CD8-positive, alpha-beta memory T cell (primary cell): ENCODE measurements at regions of chr12 and their contacts with region 1.

Region 1: DNA sequence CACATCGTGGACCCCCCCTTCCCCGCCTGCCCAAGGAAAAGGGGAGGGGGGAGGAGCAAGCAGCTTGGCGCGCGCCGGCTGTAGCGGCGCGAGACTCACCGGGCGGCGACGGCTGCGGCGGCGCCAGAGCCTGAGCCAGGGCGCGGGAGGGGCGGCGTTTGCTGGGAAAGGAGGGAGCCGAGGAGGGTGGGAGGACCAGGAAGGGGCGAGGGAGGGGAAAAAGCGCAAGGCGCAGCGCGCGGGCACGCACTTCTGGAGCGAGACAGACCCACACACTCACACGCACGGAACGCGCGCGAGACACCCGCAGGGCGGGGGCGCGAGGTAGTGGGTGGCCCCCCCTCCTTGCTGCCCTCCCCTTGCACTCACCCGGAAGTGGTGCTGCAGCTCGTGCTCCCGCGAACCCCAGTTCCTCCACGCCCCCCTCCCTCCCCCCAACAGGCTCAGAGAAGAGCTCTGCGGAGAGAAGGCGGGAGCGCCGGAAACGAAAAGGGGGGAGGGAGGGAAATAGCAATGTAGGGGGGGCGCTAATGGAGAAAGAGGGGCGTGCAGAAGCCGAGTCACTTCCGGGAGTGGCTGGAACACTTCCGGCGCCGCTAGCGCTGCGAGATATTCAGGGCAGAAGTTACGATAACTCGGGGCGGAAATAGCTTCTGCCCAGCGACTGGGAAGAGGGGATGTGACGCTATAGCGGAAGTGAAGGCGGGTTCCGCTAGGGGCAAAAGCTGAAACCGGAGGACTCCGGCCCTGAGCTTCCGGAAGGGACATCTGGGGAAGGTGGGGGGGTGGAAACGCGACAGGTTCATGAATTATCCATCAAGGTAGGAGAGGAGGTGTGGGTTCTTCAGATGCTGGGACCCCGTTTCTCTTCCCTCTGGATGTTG is at the start of gene ZNF384:
- DNase-seq: peak; percentile 94 to 98 (median 95)
- H3K4me3 ChIP-seq: peak within 1 kb of the TSS; percentile 61
- H3K4me3 Mint-ChIP-seq: peak within 1 kb of the TSS; percentile 85 to 96 (median 94)
- H3K27ac ChIP-seq: peak within 1 kb of the TSS; percentile 82
- H3K27ac Mint-ChIP-seq: peak within 1 kb of the TSS; percentile 92 to 99 (median 99)
- H3K4me1 ChIP-seq: peaks cover 36% of the 10 kb centered on the region
- H3K4me1 Mint-ChIP-seq: peaks cover 50 to 63% (median 55%) of the 10 kb centered on the region in 3 donors
- H3K27me3 ChIP-seq: no peaks in the 10 kb centered on the region
- H3K27me3 Mint-ChIP-seq: peaks cover 0 to 1% of the 10 kb centered on the region in 2 donors
- total RNA-seq, gene ZNF384: 58.1 to 63.3 TPM

Region 2: DNA sequence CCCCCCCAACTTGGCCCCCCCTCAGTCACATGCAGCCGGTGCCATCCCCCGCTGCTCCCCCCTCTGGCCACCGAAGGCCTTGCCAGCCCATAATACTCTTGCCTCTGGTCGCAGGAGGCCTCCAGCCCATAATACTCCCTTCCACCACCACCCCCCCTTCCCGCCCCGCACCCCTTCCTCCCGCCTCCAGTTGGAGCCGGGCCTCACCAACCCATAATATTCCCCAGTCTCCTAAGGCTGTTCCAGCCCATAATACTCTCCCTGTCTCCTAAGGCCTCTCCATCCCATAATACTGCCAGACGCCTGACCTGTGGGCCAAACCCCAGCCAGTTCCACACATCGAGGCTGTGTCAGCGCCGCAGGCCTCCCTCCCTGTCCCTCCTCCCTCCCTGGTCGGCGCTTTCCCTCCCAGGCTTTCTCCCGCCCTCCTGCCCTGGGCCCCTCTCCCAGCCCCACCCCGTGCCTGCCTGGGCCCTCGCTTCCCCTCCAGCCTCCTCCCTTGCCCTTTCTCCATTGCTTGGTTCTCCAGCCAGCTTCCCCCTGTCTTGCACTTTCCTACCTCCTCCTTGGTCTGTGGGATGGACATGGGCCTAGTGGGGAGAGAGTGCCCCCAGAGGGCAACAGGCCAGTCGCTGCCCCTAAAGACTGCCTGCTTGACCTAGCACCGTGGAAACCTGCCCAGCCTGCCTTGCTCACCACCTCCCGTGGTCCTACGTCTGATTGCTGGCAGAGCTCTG is 75.3 kb before region 1 on chr12:
- CTCF ChIA-PET with region 1: interaction called, 8 read pairs
- POLR2A ChIA-PET with region 1: interaction called, 19 read pairs
- DNase-seq: peak; percentile 48 to 84 (median 55)
- H3K4me3 ChIP-seq: no peak overlapping the region
- H3K4me3 Mint-ChIP-seq: peak overlapping the region in 2 of 7 donors; percentile 36 to 72
- H3K27ac ChIP-seq: peak overlapping the region; percentile 67
- H3K27ac Mint-ChIP-seq: peak overlapping the region; percentile 63 to 93 (median 88)
- H3K4me1 ChIP-seq: peaks cover 24% of the 10 kb centered on the region
- H3K4me1 Mint-ChIP-seq: peaks cover 36 to 55% (median 43%) of the 10 kb centered on the region in 3 donors
- H3K27me3 ChIP-seq: no peaks in the 10 kb centered on the region
- H3K27me3 Mint-ChIP-seq: no peaks in the 10 kb centered on the region

Region 3: DNA sequence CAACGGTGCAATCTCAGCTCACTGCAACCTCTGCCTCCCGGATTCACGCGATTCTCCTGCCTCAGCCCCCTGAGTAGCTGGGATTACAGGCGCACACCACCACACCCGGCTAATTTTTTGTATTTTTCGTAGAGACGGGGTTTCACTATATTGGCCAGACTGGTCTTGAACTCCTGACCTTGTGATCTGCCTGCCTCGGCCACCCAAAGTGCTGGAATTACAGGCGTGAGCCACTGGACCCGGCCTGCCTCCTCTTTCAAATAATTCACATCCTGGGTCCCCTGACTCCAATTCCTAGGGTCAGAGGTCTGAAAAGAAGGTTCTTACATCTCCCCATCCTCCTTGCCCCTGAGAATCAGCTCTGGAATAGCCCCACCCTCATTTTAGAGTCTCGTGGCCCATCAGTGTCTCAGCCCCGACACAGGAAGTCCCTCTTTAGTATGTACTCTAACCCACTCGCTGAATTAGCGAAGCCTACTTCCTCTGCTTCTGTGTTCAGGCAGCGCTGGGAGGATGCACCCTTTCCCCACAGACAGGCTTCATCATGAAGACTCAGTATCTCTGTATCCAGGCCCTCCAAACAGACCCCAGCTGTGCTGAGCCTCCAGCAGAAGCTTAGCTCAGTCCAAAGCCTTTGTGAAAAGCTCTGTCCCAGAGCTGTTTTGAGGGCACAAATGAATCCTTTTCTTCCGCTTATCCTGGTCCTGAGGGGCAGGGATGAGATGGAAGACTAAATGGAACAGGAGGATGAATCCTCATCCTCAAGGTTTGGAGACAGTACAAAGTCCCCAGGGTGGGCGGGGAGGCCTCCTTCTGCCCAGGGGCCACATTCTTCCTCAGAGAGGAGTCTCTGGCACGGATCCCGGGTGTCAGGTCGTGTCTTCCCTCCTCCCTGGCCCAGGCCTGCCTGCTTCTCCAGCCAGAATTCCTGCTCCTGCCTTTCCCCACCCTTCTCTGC is 56.9 kb before region 1 on chr12:
- CTCF ChIA-PET with region 1: interaction called, 4 read pairs
- POLR2A ChIA-PET with region 1: interaction called, 18 read pairs
- DNase-seq: peak; percentile 30 to 69 (median 56)
- H3K4me3 ChIP-seq: peak overlapping the region; percentile 67
- H3K4me3 Mint-ChIP-seq: peak overlapping the region; percentile 82 to 95 (median 92)
- H3K27ac ChIP-seq: peak overlapping the region; percentile 60
- H3K27ac Mint-ChIP-seq: peak overlapping the region; percentile 92 to 100 (median 98)
- H3K4me1 ChIP-seq: peaks cover 48% of the 10 kb centered on the region
- H3K4me1 Mint-ChIP-seq: peaks cover 64 to 74% (median 66%) of the 10 kb centered on the region in 3 donors
- H3K27me3 ChIP-seq: no peaks in the 10 kb centered on the region
- H3K27me3 Mint-ChIP-seq: no peaks in the 10 kb centered on the region

Region 4: GRCh38 chr12:6708960-6709394 is 19.7 kb after region 1 on chr12:
- CTCF ChIA-PET with region 1: no interaction called
- POLR2A ChIA-PET with region 1: no interaction called
- DNase-seq: peak in 3 of 5 donors; percentile 7 to 64 (median 50)
- H3K4me3 ChIP-seq: no peak overlapping the region
- H3K4me3 Mint-ChIP-seq: peak overlapping the region; percentile 75 to 94 (median 80)
- H3K27ac ChIP-seq: no peak overlapping the region
- H3K27ac Mint-ChIP-seq: peak overlapping the region; percentile 12 to 96 (median 80)
- H3K4me1 ChIP-seq: no peaks in the 10 kb centered on the region
- H3K4me1 Mint-ChIP-seq: peaks cover 7 to 10% (median 8%) of the 10 kb centered on the region in 3 donors
- H3K27me3 ChIP-seq: no peaks in the 10 kb centered on the region
- H3K27me3 Mint-ChIP-seq: peaks cover 25 to 27% of the 10 kb centered on the region in 2 donors

Region 5: GRCh38 chr12:6723607-6724396 is 34.6 kb after region 1 on chr12 and contains the start of gene COPS7A:
- CTCF ChIA-PET with region 1: interaction called, 17 read pairs
- POLR2A ChIA-PET with region 1: interaction called, 92 read pairs
- DNase-seq: peak; percentile 90 to 96 (median 92)
- H3K4me3 ChIP-seq: peak within 1 kb of the TSS; percentile 77
- H3K4me3 Mint-ChIP-seq: peak within 1 kb of the TSS; percentile 84 to 91 (median 87)
- H3K27ac ChIP-seq: peak within 1 kb of the TSS; percentile 67
- H3K27ac Mint-ChIP-seq: peak within 1 kb of the TSS; percentile 90 to 100 (median 97)
- H3K4me1 ChIP-seq: peaks cover 19% of the 10 kb centered on the region
- H3K4me1 Mint-ChIP-seq: peaks cover 22 to 32% (median 23%) of the 10 kb centered on the region in 3 donors
- H3K27me3 ChIP-seq: no peaks in the 10 kb centered on the region
- H3K27me3 Mint-ChIP-seq: no peaks in the 10 kb centered on the region
- total RNA-seq, gene COPS7A: 48.8 to 49.7 TPM

Region 6: DNA sequence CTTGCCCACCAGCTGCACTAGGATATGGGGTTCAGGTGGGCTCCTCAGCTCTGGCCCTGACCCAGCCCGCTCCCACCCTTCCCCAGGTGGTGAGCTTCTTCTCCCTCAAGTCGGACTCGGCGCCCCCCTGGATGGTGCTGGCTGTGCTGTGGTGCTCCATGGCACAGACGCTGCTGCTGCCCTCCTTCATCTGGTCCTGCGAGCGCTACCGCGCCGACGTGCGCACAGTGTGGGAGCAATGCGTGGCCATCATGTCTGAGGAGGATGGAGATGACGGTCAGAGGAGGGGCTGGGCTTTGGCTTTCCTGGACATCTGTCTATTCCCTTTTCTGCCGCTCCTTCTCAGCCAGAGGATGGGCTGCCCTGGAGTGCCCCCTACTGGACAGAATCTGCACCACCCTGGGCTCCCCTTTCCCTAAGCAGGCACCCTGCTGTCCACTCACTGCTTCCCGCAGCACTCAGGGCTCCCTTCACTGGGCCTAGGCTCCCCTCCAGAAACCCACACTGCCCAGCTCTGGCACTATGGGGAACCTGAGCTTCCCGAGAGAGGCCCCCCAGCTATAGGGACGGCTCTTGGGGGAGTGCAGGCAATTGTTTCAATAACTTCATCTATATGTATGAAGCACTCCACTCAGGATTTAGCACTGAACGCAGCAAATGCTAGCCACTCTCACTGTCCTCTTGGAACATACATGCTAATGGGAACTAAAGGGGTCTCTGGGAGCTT is 136.3 kb after region 1 on chr12:
- CTCF ChIA-PET with region 1: no interaction called
- POLR2A ChIA-PET with region 1: interaction called, 10 read pairs
- DNase-seq: peak; percentile 62 to 80 (median 71)
- H3K4me3 ChIP-seq: no peak overlapping the region
- H3K4me3 Mint-ChIP-seq: peak overlapping the region in 1 of 7 donors; percentile 70
- H3K27ac ChIP-seq: no peak overlapping the region
- H3K27ac Mint-ChIP-seq: no peak overlapping the region
- H3K4me1 ChIP-seq: peaks cover 18% of the 10 kb centered on the region
- H3K4me1 Mint-ChIP-seq: peaks cover 20 to 36% (median 24%) of the 10 kb centered on the region in 3 donors
- H3K27me3 ChIP-seq: peaks cover 25% of the 10 kb centered on the region
- H3K27me3 Mint-ChIP-seq: peaks cover 26 to 68% of the 10 kb centered on the region in 2 donors

Region 7: DNA sequence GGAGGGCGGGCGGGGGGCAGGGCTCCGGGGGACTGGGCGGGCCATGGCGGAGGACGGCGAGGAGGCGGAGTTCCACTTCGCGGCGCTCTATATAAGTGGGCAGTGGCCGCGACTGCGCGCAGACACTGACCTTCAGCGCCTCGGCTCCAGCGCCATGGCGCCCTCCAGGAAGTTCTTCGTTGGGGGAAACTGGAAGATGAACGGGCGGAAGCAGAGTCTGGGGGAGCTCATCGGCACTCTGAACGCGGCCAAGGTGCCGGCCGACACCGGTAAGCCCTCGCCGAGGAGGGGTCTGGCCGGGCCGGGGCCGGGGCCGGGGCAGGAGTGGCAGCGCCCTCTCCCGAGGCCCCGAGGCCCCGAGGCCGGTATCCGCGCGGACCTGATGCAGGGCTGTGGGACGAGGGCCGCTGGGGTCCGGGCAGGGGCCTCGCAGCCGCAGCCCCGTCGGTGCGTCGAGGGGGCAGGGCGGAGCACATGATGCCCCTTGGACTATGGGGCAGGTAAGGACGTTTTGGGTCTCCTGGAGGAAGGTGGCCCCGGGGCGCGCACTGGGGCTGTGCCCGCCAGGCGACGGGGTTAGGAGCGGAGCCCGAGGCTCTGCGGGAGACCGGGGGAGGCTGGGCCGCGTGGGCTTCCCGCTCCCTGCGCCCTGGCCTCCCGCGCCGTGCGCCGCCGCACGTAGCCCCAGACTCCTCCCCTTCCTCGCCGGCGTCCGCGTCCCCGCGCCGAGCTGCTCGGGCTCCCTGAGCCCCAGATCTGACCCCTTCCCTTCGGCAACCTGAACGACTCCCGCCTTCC is 178.4 kb after region 1 on chr12 and contains the start of gene TPI1:
- CTCF ChIA-PET with region 1: interaction called, 3 read pairs
- POLR2A ChIA-PET with region 1: interaction called, 13 read pairs
- DNase-seq: peak; percentile 62 to 85 (median 73)
- H3K4me3 ChIP-seq: peak within 1 kb of the TSS; percentile 58
- H3K4me3 Mint-ChIP-seq: peak within 1 kb of the TSS; percentile 87 to 98 (median 92)
- H3K27ac ChIP-seq: peak within 1 kb of the TSS; percentile 76
- H3K27ac Mint-ChIP-seq: peak within 1 kb of the TSS; percentile 85 to 96 (median 92)
- H3K4me1 ChIP-seq: peaks cover 38% of the 10 kb centered on the region
- H3K4me1 Mint-ChIP-seq: peaks cover 43 to 55% (median 47%) of the 10 kb centered on the region in 3 donors
- H3K27me3 ChIP-seq: no peaks in the 10 kb centered on the region
- H3K27me3 Mint-ChIP-seq: no peaks in the 10 kb centered on the region
- total RNA-seq, gene TPI1: 1,331 to 1,374 TPM